ENCODE measurements at regions of chr6 and their contacts with region 1.

Region 1: GRCh38 chr6:130587778-130588520 is 222.1 kb downstream of the TMEM200A start:
- DNase-seq: no peak
- H3K4me3 ChIP-seq: no peak overlapping the region
- H3K4me3 Mint-ChIP-seq: no peak overlapping the region
- H3K27ac ChIP-seq: no peak overlapping the region
- H3K27ac Mint-ChIP-seq: no peak overlapping the region
- H3K4me1 ChIP-seq: no peaks in the 10 kb centered on the region
- H3K4me1 Mint-ChIP-seq: peaks cover 2 to 18% (median 16%) of the 10 kb centered on the region in 3 donors
- H3K27me3 ChIP-seq: no peaks in the 10 kb centered on the region
- H3K27me3 Mint-ChIP-seq: no peaks in the 10 kb centered on the region

Region 2: GRCh38 chr6:130575971-130576370 is 12.0 kb before region 1 on chr6:
- CTCF ChIA-PET with region 1: interaction called, 10 read pairs
- POLR2A ChIA-PET with region 1: interaction called, 3 read pairs
- DNase-seq: peak; percentile 20 to 75 (median 70)
- H3K4me3 ChIP-seq: peak overlapping the region; percentile 26
- H3K4me3 Mint-ChIP-seq: peak overlapping the region in 6 of 7 donors; percentile 59 to 87 (median 72)
- H3K27ac ChIP-seq: no peak overlapping the region
- H3K27ac Mint-ChIP-seq: peak overlapping the region; percentile 0 to 81 (median 64)
- H3K4me1 ChIP-seq: peaks cover 48% of the 10 kb centered on the region
- H3K4me1 Mint-ChIP-seq: peaks cover 52 to 65% (median 60%) of the 10 kb centered on the region in 3 donors
- H3K27me3 ChIP-seq: no peaks in the 10 kb centered on the region
- H3K27me3 Mint-ChIP-seq: no peaks in the 10 kb centered on the region